ENCODE measurements at regions of chrX and their contacts with region 1.

Region 1: GRCh38 chrX:38327007-38327774 is at the start of gene RPGR:
- DNase-seq: peak; percentile 83
- ATAC-seq: peak; percentile 97
- H3K4me3 ChIP-seq: peak within 1 kb of the TSS; percentile 72 to 85 (median 83)
- H3K27ac ChIP-seq: peak within 1 kb of the TSS; percentile 90
- H3K4me1 ChIP-seq: peaks cover 43% of the 10 kb centered on the region
- H3K27me3 ChIP-seq: no peaks in the 10 kb centered on the region
- CTCF ChIP-seq: peak; percentile 95
- EP300 ChIP-seq: no peak
- POLR2A ChIP-seq: peak; percentile 33 to 47; a peak in 1 of 4 replicates
- RAD21 ChIP-seq: peak; percentile 88
- total RNA-seq, gene RPGR: 12.1 and 13.6 TPM in 2 replicates

Region 2: DNA sequence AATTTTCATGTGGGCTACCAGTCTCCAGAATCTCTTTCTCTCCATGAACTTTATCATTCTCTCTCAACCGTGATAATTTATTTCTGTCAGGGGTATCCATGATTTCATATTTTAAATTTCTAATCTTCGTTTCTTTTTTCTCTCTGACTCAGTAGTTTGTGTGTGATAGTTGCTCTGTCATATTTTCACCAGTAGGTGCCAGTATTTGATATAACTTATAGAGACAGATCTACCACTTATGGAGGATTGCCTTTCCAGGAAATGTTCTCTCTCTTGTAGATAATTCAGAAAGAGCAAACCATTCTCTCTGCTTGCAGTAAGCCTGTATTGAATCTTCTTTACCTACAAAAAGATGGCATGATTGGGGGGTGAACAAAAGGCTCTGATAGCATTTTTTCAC is 400.5 kb before region 1 on chrX:
- CTCF ChIA-PET with region 1: no interaction called
- POLR2A ChIA-PET with region 1: no interaction called
- in situ Hi-C with region 1: no loop called
- intact Hi-C with region 1: no loop called
- DNase-seq: peak; percentile 25
- ATAC-seq: peak; percentile 53; the same call in 2 of the 3 replicates
- H3K4me3 ChIP-seq: no peak overlapping the region
- H3K27ac ChIP-seq: no peak overlapping the region
- H3K4me1 ChIP-seq: no peaks in the 10 kb centered on the region
- H3K27me3 ChIP-seq: no peaks in the 10 kb centered on the region
- CTCF ChIP-seq: peak; percentile 59
- EP300 ChIP-seq: no peak
- POLR2A ChIP-seq: no peak
- RAD21 ChIP-seq: peak; percentile 70

Region 3: GRCh38 chrX:38192007-38192810 is 135.0 kb before region 1 on chrX:
- CTCF ChIA-PET with region 1: no interaction called
- POLR2A ChIA-PET with region 1: no interaction called
- in situ Hi-C with region 1: no loop called
- intact Hi-C with region 1: loop called (anchors 2 kb)
- DNase-seq: no peak
- ATAC-seq: peak; percentile 62
- H3K4me3 ChIP-seq: no peak overlapping the region
- H3K27ac ChIP-seq: no peak overlapping the region
- H3K4me1 ChIP-seq: no peaks in the 10 kb centered on the region
- H3K27me3 ChIP-seq: no peaks in the 10 kb centered on the region
- CTCF ChIP-seq: peak; percentile 45
- EP300 ChIP-seq: no peak
- POLR2A ChIP-seq: no peak
- RAD21 ChIP-seq: no peak

Region 4: DNA sequence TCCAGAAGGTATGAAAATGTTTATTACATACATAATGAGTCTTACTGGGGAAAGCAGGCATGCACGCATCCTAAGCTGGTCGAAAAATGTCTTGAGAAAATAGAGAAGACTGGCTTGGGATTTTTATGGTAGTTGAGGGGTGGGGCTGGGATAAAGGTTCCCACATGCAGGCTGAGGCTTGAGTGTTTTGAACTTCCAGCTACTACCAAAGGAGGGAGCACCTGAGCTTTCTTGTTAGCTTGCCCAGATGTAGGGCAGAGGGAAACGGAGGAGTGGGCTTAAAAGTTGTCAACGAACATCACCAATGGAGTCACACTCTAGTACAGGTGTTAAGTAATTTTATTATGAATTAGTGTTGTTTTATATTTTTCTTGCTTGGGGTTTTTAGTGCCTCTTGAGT is 67.0 kb before region 1 on chrX:
- CTCF ChIA-PET with region 1: interaction called, 6 read pairs
- POLR2A ChIA-PET with region 1: no interaction called
- in situ Hi-C with region 1: no loop called
- intact Hi-C with region 1: loop called (anchors 1 kb)
- DNase-seq: peak; percentile 25
- ATAC-seq: peak; percentile 81
- H3K4me3 ChIP-seq: no peak overlapping the region
- H3K27ac ChIP-seq: no peak overlapping the region
- H3K4me1 ChIP-seq: no peaks in the 10 kb centered on the region
- H3K27me3 ChIP-seq: no peaks in the 10 kb centered on the region
- CTCF ChIP-seq: peak; percentile 63
- EP300 ChIP-seq: no peak
- POLR2A ChIP-seq: no peak
- RAD21 ChIP-seq: no peak

Region 5: GRCh38 chrX:38347136-38347535 is 19.9 kb after region 1 on chrX:
- CTCF ChIA-PET with region 1: no interaction called
- POLR2A ChIA-PET with region 1: interaction called, 19 read pairs
- in situ Hi-C with region 1: no loop called
- intact Hi-C with region 1: loop called (anchors 1 kb)
- DNase-seq: no peak
- ATAC-seq: no peak
- H3K4me3 ChIP-seq: no peak overlapping the region
- H3K27ac ChIP-seq: no peak overlapping the region
- H3K4me1 ChIP-seq: peaks cover 75% of the 10 kb centered on the region
- H3K27me3 ChIP-seq: no peaks in the 10 kb centered on the region
- CTCF ChIP-seq: no peak
- EP300 ChIP-seq: no peak
- POLR2A ChIP-seq: no peak
- RAD21 ChIP-seq: no peak